ENCODE measurements at regions of chr10 and their contacts with region 1.

Region 1: GRCh38 chr10:127186813-127187212 is 9.6 kb downstream of the INSYN2A start:
- DNase-seq: no peak
- H3K4me3 Mint-ChIP-seq: no peak overlapping the region
- H3K27ac Mint-ChIP-seq: no peak overlapping the region
- H3K4me1 Mint-ChIP-seq: no peaks in the 10 kb centered on the region
- H3K27me3 Mint-ChIP-seq: no peaks in the 10 kb centered on the region

Region 2: DNA sequence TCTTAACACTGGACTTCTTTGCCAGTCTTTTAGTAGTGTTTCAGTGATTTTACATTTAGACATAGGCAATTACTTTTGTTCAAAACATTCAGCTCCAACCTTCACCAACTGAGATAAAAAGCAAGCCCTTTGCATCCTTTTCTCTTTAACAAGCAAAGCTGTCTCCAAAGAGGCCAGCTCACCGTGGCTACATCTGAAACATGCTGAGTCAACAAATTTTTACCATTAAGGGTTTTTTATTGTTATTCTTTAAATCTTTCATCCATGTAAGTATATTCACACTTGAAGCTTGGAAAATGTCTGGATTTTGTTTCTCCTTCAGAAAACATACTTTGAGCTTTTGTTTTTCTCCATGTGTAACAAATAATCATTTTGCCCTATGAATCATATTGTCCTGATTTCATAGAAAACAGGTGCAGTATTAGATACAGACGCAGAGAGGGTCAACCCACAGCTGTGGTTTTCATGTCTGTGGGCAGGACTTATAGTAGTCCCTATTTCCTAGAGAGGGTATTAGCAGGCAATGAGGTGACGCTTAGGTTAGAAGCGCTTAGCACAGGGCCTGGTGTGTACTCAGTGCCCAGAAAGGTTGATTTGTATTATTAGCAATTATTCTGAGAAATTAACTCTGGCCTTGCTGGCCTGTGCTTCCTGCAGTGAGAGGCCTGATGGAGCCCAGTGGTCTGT is 839.9 kb after region 1 on chr10:
- intact Hi-C with region 1: loop called (anchors 5 kb)
- DNase-seq: no peak
- H3K4me3 Mint-ChIP-seq: no peak overlapping the region
- H3K27ac Mint-ChIP-seq: peak overlapping the region; percentile 63
- H3K4me1 Mint-ChIP-seq: peaks cover 13% of the 10 kb centered on the region
- H3K27me3 Mint-ChIP-seq: no peaks in the 10 kb centered on the region